T-cell (primary cell): ENCODE measurements at regions of chr2 and their contacts with region 1.

Region 1: DNA sequence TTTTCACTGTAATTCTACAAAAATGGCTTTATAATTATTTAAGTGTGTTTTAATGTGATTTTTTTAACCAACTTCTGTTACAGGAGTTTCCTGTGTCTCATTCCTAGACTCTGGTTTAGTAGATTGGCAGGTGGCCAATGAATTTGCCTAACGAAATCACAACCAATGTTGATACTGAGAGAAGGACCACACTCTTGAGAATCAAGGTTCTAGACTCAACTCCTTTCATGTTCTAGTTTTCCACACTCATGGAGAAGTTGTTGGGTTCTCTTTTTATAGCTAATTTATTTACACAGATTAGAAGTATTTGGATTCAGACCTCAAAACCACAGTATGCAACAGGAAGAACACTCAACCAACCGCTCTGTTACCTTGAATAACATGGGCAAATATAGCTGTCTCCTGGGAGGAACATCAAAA is 22.6 kb upstream of the USP34 start:
- DNase-seq: peak in 3 of 35 experiments; percentile 2 to 42 (median 8)
- ATAC-seq: peak; percentile 45 to 77 (median 65)
- H3K4me3 ChIP-seq: no peak overlapping the region
- H3K4me3 Mint-ChIP-seq: peak overlapping the region; percentile 21 to 42 (median 37)
- H3K27ac ChIP-seq: peak overlapping the region; percentile 26
- H3K27ac Mint-ChIP-seq: peak overlapping the region; percentile 85 to 89
- H3K4me1 ChIP-seq: peaks cover 5 to 14% of the 10 kb centered on the region in 2 experiments
- H3K4me1 Mint-ChIP-seq: peaks cover 14 to 25% (median 25%) of the 10 kb centered on the region in 3 donors
- H3K27me3 ChIP-seq: no peaks in the 10 kb centered on the region
- H3K27me3 Mint-ChIP-seq: no peaks in the 10 kb centered on the region

Region 2: DNA sequence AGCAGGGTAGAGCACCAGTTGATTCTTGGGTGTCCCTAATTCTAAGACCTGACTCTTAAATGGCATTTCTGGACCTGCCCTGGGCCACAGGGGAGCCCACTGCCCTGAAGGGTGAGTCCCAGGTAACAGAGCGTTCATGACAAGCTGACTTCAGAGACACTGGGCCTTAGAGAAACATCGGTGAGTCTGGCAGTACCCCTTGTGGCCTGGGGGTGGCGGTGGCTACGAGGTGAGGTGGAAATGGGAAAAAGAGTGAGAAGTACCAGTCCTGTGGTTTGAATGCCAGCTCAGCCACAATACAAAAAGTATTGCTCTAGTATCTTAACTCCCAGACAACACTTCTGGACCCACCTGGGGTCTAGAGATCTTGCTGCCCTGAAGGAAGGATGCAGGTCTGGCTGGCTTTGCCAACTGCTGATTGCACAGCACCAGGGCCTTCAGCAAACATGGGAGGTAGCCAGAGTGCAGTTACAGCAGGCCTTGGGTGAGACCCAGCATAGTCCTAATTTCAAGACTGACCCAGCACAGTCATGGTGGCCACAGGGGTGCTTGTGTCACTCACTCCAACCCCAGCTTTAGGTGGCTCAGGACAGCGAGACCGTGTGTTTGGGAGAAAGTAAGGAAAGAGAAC is 67.2 kb before region 1 on chr2:
- CTCF ChIA-PET with region 1: interaction called in 1 of 2 experiments, 10 read pairs
- POLR2A ChIA-PET with region 1: no interaction called
- DNase-seq: peak; percentile 52 to 83 (median 72)
- ATAC-seq: peak; percentile 88 to 89 (median 88)
- H3K4me3 ChIP-seq: no peak overlapping the region
- H3K4me3 Mint-ChIP-seq: peak overlapping the region in 2 of 3 donors; percentile 7 to 13
- H3K27ac ChIP-seq: peak overlapping the region; percentile 69
- H3K27ac Mint-ChIP-seq: peak overlapping the region; percentile 89 to 97
- H3K4me1 ChIP-seq: peaks cover 4 to 40% of the 10 kb centered on the region in 2 experiments
- H3K4me1 Mint-ChIP-seq: peaks cover 70 to 75% (median 74%) of the 10 kb centered on the region in 3 donors
- H3K27me3 ChIP-seq: no peaks in the 10 kb centered on the region
- H3K27me3 Mint-ChIP-seq: no peaks in the 10 kb centered on the region

Region 3: GRCh38 chr2:61520261-61520660 is 26.7 kb after region 1 on chr2:
- CTCF ChIA-PET with region 1: no interaction called
- POLR2A ChIA-PET with region 1: interaction called, 7 to 12 read pairs
- DNase-seq: no peak
- ATAC-seq: no peak
- H3K4me3 ChIP-seq: no peak overlapping the region
- H3K4me3 Mint-ChIP-seq: no peak overlapping the region
- H3K27ac ChIP-seq: no peak overlapping the region
- H3K27ac Mint-ChIP-seq: no peak overlapping the region
- H3K4me1 ChIP-seq: peaks cover 0 to 5% of the 10 kb centered on the region in 2 experiments
- H3K4me1 Mint-ChIP-seq: peaks cover 18 to 43% (median 33%) of the 10 kb centered on the region in 3 donors
- H3K27me3 ChIP-seq: no peaks in the 10 kb centered on the region
- H3K27me3 Mint-ChIP-seq: no peaks in the 10 kb centered on the region

Region 4: GRCh38 chr2:61557381-61557780 is 63.8 kb after region 1 on chr2:
- CTCF ChIA-PET with region 1: no interaction called
- POLR2A ChIA-PET with region 1: no interaction called
- DNase-seq: no peak
- ATAC-seq: no peak
- H3K4me3 ChIP-seq: no peak overlapping the region
- H3K4me3 Mint-ChIP-seq: no peak overlapping the region
- H3K27ac ChIP-seq: no peak overlapping the region
- H3K27ac Mint-ChIP-seq: no peak overlapping the region
- H3K4me1 ChIP-seq: no peaks in the 10 kb centered on the region
- H3K4me1 Mint-ChIP-seq: no peaks in the 10 kb centered on the region
- H3K27me3 ChIP-seq: peaks cover 0 to 2% of the 10 kb centered on the region in 2 experiments
- H3K27me3 Mint-ChIP-seq: no peaks in the 10 kb centered on the region